ENCODE measurements at regions of chr11 and their contacts with region 1.

Region 1: DNA sequence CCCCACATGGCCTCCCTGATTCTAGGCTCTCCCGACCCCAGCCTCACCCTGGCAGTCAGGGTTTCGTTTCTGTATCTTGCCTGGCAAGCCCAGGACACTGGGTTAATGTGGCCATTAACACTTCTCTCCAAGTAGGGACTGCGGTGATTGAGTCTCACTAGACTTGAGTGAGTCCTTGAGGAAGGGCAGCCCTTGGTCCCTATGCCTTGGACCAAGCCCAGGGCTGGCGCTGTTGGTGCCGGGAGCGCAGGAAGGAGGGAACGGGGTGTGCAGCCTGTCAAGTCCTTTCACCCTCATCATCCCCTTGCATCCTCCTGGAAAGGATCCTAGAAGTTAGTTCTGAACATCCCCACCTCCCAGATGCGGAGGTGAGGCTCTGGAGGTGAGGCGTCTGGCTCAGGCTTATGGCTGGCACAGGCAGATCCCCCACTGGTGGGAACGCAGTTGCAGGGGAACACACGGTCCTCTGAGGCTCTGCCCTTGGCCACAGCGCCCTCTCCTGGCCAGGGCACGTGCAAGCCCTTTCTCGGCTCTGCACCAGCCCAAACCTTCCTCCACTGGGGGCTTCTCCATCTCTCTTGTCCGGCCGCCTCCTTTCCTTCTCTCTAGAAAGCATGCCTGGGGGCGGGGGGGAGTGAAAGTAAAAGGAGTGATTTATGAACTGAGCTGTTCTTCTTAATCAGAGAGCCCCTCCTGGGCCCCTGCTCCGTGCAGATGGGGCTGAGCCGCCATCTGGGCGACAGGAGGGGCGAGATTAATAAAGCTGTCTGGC is 56.7 kb downstream of the TP53I11 start:
- DNase-seq: peak; percentile 69
- H3K4me3 ChIP-seq: no peak overlapping the region
- H3K27ac ChIP-seq: no peak overlapping the region
- H3K4me1 ChIP-seq: no peaks in the 10 kb centered on the region
- H3K27me3 ChIP-seq: no peaks in the 10 kb centered on the region
- CTCF ChIP-seq: peak; percentile 83 to 95
- POLR2A ChIP-seq: no peak

Region 2: DNA sequence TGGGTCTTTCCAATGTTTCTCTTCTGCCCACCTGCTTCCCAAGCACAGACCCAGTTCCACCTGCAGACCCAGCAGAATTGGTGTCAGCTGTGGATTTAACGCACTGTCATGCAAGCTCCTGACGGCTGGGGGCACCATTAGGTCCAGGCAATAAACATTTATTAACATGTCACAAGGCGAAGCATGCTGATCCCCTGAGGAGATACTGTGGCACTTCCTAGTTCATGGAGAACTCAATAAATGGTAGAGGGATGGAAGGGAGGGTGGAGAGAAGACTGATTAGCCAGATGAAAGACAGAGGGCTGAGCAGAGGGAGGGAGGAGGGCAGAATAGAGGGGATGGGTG is 235.6 kb before region 1 on chr11:
- CTCF ChIA-PET with region 1: interaction called, 11 read pairs
- POLR2A ChIA-PET with region 1: no interaction called
- dilution Hi-C with region 1: no loop called
- intact Hi-C with region 1: loop called (anchors 1 kb)
- DNase-seq: peak; percentile 55
- H3K4me3 ChIP-seq: no peak overlapping the region
- H3K27ac ChIP-seq: no peak overlapping the region
- H3K4me1 ChIP-seq: no peaks in the 10 kb centered on the region
- H3K27me3 ChIP-seq: peaks cover 0 to 3% of the 10 kb centered on the region in 2 experiments
- CTCF ChIP-seq: peak; percentile 39 to 55
- POLR2A ChIP-seq: no peak

Region 3: GRCh38 chr11:44814881-44815592 is 79.0 kb before region 1 on chr11:
- CTCF ChIA-PET with region 1: interaction called, 3 read pairs
- POLR2A ChIA-PET with region 1: no interaction called
- dilution Hi-C with region 1: no loop called
- intact Hi-C with region 1: loop called (anchors 5 kb)
- DNase-seq: no peak
- H3K4me3 ChIP-seq: no peak overlapping the region
- H3K27ac ChIP-seq: no peak overlapping the region
- H3K4me1 ChIP-seq: peaks cover 33% of the 10 kb centered on the region
- H3K27me3 ChIP-seq: no peaks in the 10 kb centered on the region
- CTCF ChIP-seq: no peak
- POLR2A ChIP-seq: no peak

Measured in endothelial cell of umbilical vein (primary cell).